HepG2 (cell line): ENCODE measurements at regions of chr5 and their contacts with region 1.

Region 1: GRCh38 chr5:141878711-141879425 is 658 bp upstream of the PCDH1 start:
- DNase-seq: peak; percentile 85
- ATAC-seq: peak; percentile 80
- H3K4me3 ChIP-seq: peak overlapping the region; percentile 29 to 72 (median 32); a peak in 5 of 6 replicates
- H3K27ac ChIP-seq: no peak overlapping the region
- H3K4me1 ChIP-seq: peaks cover 62% of the 10 kb centered on the region
- H3K27me3 ChIP-seq: peaks cover 17 to 60% of the 10 kb centered on the region in 2 experiments
- CTCF ChIP-seq: peak; percentile 97
- EP300 ChIP-seq: no peak
- POLR2A ChIP-seq: no peak
- RAD21 ChIP-seq: peak; percentile 77

Region 2: GRCh38 chr5:141691867-141692532 is 186.9 kb before region 1 on chr5:
- CTCF ChIA-PET with region 1: interaction called, 16 read pairs
- POLR2A ChIA-PET with region 1: no interaction called
- in situ Hi-C with region 1: no loop called
- intact Hi-C with region 1: loop called (anchors 2 kb)
- DNase-seq: peak; percentile 52
- ATAC-seq: peak; percentile 95
- H3K4me3 ChIP-seq: peak overlapping the region in 1 of 3 experiments; percentile 52; a peak in 1 of 6 replicates
- H3K27ac ChIP-seq: no peak overlapping the region
- H3K4me1 ChIP-seq: no peaks in the 10 kb centered on the region
- H3K27me3 ChIP-seq: peaks cover 11 to 48% of the 10 kb centered on the region in 2 experiments
- CTCF ChIP-seq: peak; percentile 99
- EP300 ChIP-seq: no peak
- POLR2A ChIP-seq: no peak
- RAD21 ChIP-seq: peak; percentile 98

Region 3: GRCh38 chr5:141701360-141702119 is 177.3 kb before region 1 on chr5:
- CTCF ChIA-PET with region 1: interaction called, 19 read pairs
- POLR2A ChIA-PET with region 1: interaction called, 3 read pairs
- in situ Hi-C with region 1: loop called (anchors 5 kb)
- intact Hi-C with region 1: loop called (anchors 1 kb)
- DNase-seq: no peak
- ATAC-seq: peak; percentile 12; the same call in 2 of the 3 replicates
- H3K4me3 ChIP-seq: no peak overlapping the region
- H3K27ac ChIP-seq: no peak overlapping the region
- H3K4me1 ChIP-seq: peaks cover 16% of the 10 kb centered on the region; the same call in 1 of the 2 replicates
- H3K27me3 ChIP-seq: peaks cover 12 to 52% of the 10 kb centered on the region in 2 experiments
- CTCF ChIP-seq: no peak
- EP300 ChIP-seq: no peak
- POLR2A ChIP-seq: no peak
- RAD21 ChIP-seq: no peak

Region 4: GRCh38 chr5:141811287-141812155 is 67.3 kb before region 1 on chr5:
- CTCF ChIA-PET with region 1: no interaction called
- POLR2A ChIA-PET with region 1: no interaction called
- in situ Hi-C with region 1: no loop called
- intact Hi-C with region 1: loop called (anchors 5 kb)
- DNase-seq: peak; percentile 9
- ATAC-seq: peak; percentile 74
- H3K4me3 ChIP-seq: no peak overlapping the region
- H3K27ac ChIP-seq: no peak overlapping the region
- H3K4me1 ChIP-seq: no peaks in the 10 kb centered on the region
- H3K27me3 ChIP-seq: peaks cover 2 to 40% of the 10 kb centered on the region in 2 experiments; a peak in 3 of 5 replicates
- CTCF ChIP-seq: peak; percentile 48
- EP300 ChIP-seq: no peak
- POLR2A ChIP-seq: no peak
- RAD21 ChIP-seq: no peak

Region 5: GRCh38 chr5:141825791-141826560 is 52.9 kb before region 1 on chr5:
- CTCF ChIA-PET with region 1: no interaction called
- POLR2A ChIA-PET with region 1: no interaction called
- in situ Hi-C with region 1: no loop called
- intact Hi-C with region 1: loop called (anchors 5 kb)
- DNase-seq: no peak
- ATAC-seq: peak; percentile 78
- H3K4me3 ChIP-seq: no peak overlapping the region
- H3K27ac ChIP-seq: no peak overlapping the region
- H3K4me1 ChIP-seq: no peaks in the 10 kb centered on the region
- H3K27me3 ChIP-seq: peaks cover 0 to 22% of the 10 kb centered on the region in 2 experiments; a peak in 2 of 5 replicates
- CTCF ChIP-seq: peak; percentile 53
- EP300 ChIP-seq: no peak
- POLR2A ChIP-seq: no peak
- RAD21 ChIP-seq: no peak

Region 6: GRCh38 chr5:141940695-141941271 is 61.9 kb after region 1 on chr5:
- CTCF ChIA-PET with region 1: no interaction called
- POLR2A ChIA-PET with region 1: no interaction called
- in situ Hi-C with region 1: no loop called
- intact Hi-C with region 1: no loop called
- DNase-seq: no peak
- ATAC-seq: peak; percentile 44
- H3K4me3 ChIP-seq: no peak overlapping the region
- H3K27ac ChIP-seq: no peak overlapping the region
- H3K4me1 ChIP-seq: peaks cover 18% of the 10 kb centered on the region
- H3K27me3 ChIP-seq: no peaks in the 10 kb centered on the region
- CTCF ChIP-seq: no peak
- EP300 ChIP-seq: no peak
- POLR2A ChIP-seq: no peak
- RAD21 ChIP-seq: no peak